CD4-positive, alpha-beta T cell (primary cell): ENCODE measurements at regions of chr3 and their contacts with region 1.

Region 1: DNA sequence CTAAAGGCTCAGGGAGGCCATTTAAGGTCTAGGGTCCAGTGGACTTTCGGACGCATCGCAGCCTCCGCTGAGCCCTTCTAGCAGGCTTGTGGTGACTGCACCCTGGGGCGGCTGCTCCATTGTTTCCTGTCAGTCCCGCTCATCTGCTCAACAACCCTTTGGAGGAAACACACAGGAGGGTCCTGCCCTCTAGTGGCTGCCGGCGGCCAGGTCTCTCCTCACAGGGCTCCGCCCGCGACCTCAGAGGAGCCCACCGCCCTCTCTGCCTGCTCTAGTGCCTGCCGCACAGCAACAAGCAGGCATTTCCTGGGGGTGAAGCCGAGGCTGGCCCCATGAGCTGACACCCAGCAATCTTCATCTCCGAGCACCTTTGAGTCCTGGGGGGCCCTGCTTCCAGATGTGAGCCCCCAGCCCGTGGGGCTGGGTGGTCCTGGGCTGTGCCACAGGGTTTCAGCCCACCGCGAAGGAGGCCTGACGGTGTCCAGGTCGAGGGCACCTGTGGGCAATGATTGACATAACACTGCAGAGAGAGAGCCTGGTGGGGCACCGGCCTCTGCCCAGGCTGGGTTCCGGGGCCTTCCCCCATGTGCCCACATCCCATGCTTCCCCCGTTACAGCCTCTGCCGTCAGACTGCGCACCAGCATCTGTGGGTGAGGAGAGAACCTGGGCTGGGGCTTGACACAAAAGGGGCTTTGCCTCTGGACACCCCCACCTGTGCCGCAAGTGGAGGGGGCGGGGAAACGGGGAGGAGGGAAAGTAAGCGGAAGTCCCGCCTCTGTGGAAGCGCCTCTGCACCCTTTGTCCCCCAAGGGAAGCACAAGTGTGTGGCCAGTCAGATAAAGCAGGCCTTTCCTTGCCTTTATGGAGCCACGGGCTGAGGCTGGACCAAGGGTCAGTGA is 27.0 kb upstream of the SFMBT1 start:
- DNase-seq: peak; percentile 81 to 91 (median 86)
- ATAC-seq: peak; percentile 92
- H3K4me3 ChIP-seq: peak overlapping the region; percentile 68
- H3K4me3 Mint-ChIP-seq: peak overlapping the region; percentile 95
- H3K27ac ChIP-seq: peak overlapping the region; percentile 73 to 86
- H3K27ac Mint-ChIP-seq: peak overlapping the region; percentile 96
- H3K4me1 ChIP-seq: peaks cover 25% of the 10 kb centered on the region
- H3K4me1 Mint-ChIP-seq: peaks cover 24% of the 10 kb centered on the region
- H3K27me3 ChIP-seq: no peaks in the 10 kb centered on the region
- H3K27me3 Mint-ChIP-seq: no peaks in the 10 kb centered on the region
- CTCF ChIP-seq: peak; percentile 88

Region 2: GRCh38 chr3:52742418-52743041 is 330.4 kb before region 1 on chr3:
- CTCF ChIA-PET with region 1: no interaction called
- POLR2A ChIA-PET with region 1: no interaction called
- intact Hi-C with region 1: loop called (anchors 1 kb)
- DNase-seq: peak in 3 of 14 experiments; percentile 39 to 57 (median 54)
- ATAC-seq: peak; percentile 46
- H3K4me3 ChIP-seq: no peak overlapping the region
- H3K4me3 Mint-ChIP-seq: no peak overlapping the region
- H3K27ac ChIP-seq: no peak overlapping the region
- H3K27ac Mint-ChIP-seq: no peak overlapping the region
- H3K4me1 ChIP-seq: no peaks in the 10 kb centered on the region
- H3K4me1 Mint-ChIP-seq: no peaks in the 10 kb centered on the region
- H3K27me3 ChIP-seq: no peaks in the 10 kb centered on the region
- H3K27me3 Mint-ChIP-seq: no peaks in the 10 kb centered on the region
- CTCF ChIP-seq: peak; percentile 72

Region 3: GRCh38 chr3:52851348-52851747 is 221.6 kb before region 1 on chr3:
- CTCF ChIA-PET with region 1: no interaction called
- POLR2A ChIA-PET with region 1: no interaction called
- intact Hi-C with region 1: loop called in 1 of 2 experiments (anchors 2 kb)
- DNase-seq: peak in 5 of 14 experiments; percentile 12 to 62 (median 34)
- ATAC-seq: peak; percentile 69
- H3K4me3 ChIP-seq: no peak overlapping the region
- H3K4me3 Mint-ChIP-seq: no peak overlapping the region
- H3K27ac ChIP-seq: no peak overlapping the region
- H3K27ac Mint-ChIP-seq: no peak overlapping the region
- H3K4me1 ChIP-seq: no peaks in the 10 kb centered on the region
- H3K4me1 Mint-ChIP-seq: no peaks in the 10 kb centered on the region
- H3K27me3 ChIP-seq: no peaks in the 10 kb centered on the region
- H3K27me3 Mint-ChIP-seq: no peaks in the 10 kb centered on the region
- CTCF ChIP-seq: peak; percentile 55

Region 4: DNA sequence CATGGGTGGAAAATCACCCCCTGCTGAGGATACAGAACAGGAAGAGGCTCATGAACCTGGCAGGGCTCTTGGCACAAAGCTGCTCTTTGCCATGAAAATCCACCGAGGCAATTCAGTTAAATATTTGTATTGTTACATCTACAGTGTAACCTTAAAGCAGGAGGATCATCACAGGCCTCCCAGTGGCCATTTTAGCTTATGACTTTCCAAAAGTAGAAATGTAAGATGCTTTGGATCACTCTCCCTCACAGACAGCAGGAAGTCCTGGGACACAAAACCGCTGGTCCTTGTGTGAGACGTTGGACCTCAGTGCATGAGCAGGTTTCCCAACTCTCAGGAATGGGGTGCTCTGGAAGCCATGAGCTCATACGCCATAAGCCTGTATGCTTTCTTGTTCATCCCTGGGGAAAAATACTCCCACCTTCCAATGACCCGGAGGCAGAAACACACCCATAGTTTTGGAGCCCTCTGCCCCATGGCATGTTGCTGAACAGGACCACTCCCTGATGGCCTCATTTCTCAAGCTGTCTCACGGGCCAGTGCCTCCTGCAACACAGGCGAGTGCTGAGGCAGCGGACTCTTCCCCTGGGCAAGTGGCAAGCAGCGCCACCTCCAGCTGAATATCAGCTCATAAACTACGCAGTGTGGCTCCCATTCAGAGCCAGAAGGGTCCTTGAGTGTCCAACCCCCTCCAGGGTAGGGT is 205.7 kb before region 1 on chr3:
- CTCF ChIA-PET with region 1: no interaction called
- POLR2A ChIA-PET with region 1: no interaction called
- intact Hi-C with region 1: no loop called
- DNase-seq: no peak
- ATAC-seq: no peak
- H3K4me3 ChIP-seq: no peak overlapping the region
- H3K4me3 Mint-ChIP-seq: no peak overlapping the region
- H3K27ac ChIP-seq: no peak overlapping the region
- H3K27ac Mint-ChIP-seq: no peak overlapping the region
- H3K4me1 ChIP-seq: no peaks in the 10 kb centered on the region
- H3K4me1 Mint-ChIP-seq: peaks cover 8% of the 10 kb centered on the region
- H3K27me3 ChIP-seq: no peaks in the 10 kb centered on the region
- H3K27me3 Mint-ChIP-seq: no peaks in the 10 kb centered on the region
- CTCF ChIP-seq: no peak

Region 5: DNA sequence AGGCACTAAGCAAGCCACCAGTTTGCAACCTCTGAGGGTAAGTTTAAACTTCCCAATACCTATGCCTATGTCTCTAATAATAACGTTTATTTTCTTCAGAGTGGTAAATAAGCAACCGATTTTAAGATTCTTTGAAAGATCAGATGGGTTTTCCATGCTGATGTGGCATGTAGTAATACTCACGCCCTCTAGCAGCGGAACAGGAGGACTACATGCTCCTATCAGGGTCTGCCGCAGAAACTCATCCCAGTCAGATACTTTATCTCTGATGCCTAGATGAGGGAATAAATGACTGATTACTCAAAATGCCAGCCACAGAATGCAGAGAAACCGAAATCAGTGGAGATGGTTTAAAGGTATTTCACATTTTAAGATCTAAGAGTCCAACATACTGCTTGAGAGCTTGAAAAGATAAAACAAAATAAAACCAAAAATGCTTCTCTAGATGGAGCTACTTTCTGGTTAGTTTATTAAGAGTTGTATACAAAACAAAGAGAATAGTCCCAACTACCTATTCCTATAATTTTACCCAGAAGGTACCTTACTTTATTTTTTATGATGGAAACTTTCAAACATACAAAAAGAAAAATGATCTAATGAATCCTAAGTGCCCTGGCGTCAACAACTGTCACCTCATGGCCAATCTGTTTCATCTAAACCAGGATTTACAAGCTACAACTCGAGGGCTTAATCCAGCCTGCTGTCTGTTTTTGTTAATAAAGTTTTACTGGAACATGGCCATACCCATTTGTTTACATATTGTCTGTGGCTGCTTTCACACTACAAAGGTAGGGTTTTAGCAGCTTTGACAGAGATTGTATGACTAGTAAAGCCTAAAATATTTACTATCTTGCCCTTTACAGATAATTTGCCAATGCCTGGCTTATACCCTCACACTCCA is 138.0 kb before region 1 on chr3:
- CTCF ChIA-PET with region 1: interaction called, 4 read pairs
- POLR2A ChIA-PET with region 1: no interaction called
- intact Hi-C with region 1: loop called (anchors 1 to 2 kb)
- DNase-seq: peak; percentile 20 to 79 (median 34)
- ATAC-seq: peak; percentile 99
- H3K4me3 ChIP-seq: no peak overlapping the region
- H3K4me3 Mint-ChIP-seq: peak overlapping the region; percentile 14
- H3K27ac ChIP-seq: no peak overlapping the region
- H3K27ac Mint-ChIP-seq: peak overlapping the region; percentile 12
- H3K4me1 ChIP-seq: no peaks in the 10 kb centered on the region
- H3K4me1 Mint-ChIP-seq: peaks cover 17% of the 10 kb centered on the region
- H3K27me3 ChIP-seq: no peaks in the 10 kb centered on the region
- H3K27me3 Mint-ChIP-seq: no peaks in the 10 kb centered on the region
- CTCF ChIP-seq: peak; percentile 92

Region 6: GRCh38 chr3:53045518-53046170 is 27.3 kb before region 1 on chr3 and contains the start of gene SFMBT1:
- CTCF ChIA-PET with region 1: interaction called, 9 read pairs
- POLR2A ChIA-PET with region 1: interaction called, 22 read pairs
- intact Hi-C with region 1: loop called (anchors 1 to 2 kb)
- DNase-seq: peak; percentile 55 to 93 (median 73)
- ATAC-seq: peak; percentile 50
- H3K4me3 ChIP-seq: peak within 1 kb of the TSS; percentile 91
- H3K4me3 Mint-ChIP-seq: peak within 1 kb of the TSS; percentile 95
- H3K27ac ChIP-seq: peak within 1 kb of the TSS; percentile 72 to 88
- H3K27ac Mint-ChIP-seq: peak within 1 kb of the TSS; percentile 99
- H3K4me1 ChIP-seq: peaks cover 33% of the 10 kb centered on the region
- H3K4me1 Mint-ChIP-seq: peaks cover 52% of the 10 kb centered on the region
- H3K27me3 ChIP-seq: no peaks in the 10 kb centered on the region
- H3K27me3 Mint-ChIP-seq: peaks cover 3% of the 10 kb centered on the region
- CTCF ChIP-seq: no peak
- total RNA-seq, gene SFMBT1: 54.3 to 55.9 TPM